ENCODE measurements at regions of chr9 and their contacts with region 1.

Region 1: GRCh38 chr9:83208065-83208850 is 145.3 kb upstream of the RASEF start:
- DNase-seq: no peak
- ATAC-seq: peak in 2 of 4 donors; percentile 11 to 25
- H3K4me3 ChIP-seq: no peak overlapping the region
- H3K27ac ChIP-seq: no peak overlapping the region
- H3K4me1 ChIP-seq: peaks cover 0 to 4% (median 0%) of the 10 kb centered on the region in 12 donors
- H3K27me3 ChIP-seq: no peaks in the 10 kb centered on the region
- CTCF ChIP-seq: no peak
- POLR2A ChIP-seq: no peak

Region 2: DNA sequence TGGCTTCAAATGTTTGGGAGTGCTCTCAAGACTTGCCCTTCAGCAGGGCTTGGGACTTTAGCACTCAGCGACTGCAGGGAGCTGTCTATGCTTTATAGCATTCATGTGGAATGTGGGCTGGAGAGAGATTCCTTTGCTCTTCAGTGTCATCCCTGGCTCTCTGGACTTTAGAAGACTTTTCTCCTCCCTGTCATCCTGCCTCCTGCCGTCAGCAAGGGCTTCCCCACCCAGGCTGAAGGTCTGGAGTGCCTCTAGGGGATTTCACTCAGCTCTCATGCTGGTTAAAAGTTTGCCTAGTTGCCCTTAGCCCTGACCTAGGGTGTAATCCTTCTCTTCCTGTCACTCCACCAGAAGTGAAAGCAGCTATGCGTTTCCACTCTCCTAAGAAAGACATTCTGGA is 119.1 kb after region 1 on chr9:
- intact Hi-C with region 1: loop called in 4 of 10 experiments (anchors 5 to 10 kb)
- DNase-seq: no peak
- ATAC-seq: peak in 3 of 4 donors; percentile 37 to 71 (median 45)
- H3K4me3 ChIP-seq: no peak overlapping the region
- H3K27ac ChIP-seq: no peak overlapping the region
- H3K4me1 ChIP-seq: peaks cover 0 to 17% (median 3%) of the 10 kb centered on the region in 12 donors
- H3K27me3 ChIP-seq: no peaks in the 10 kb centered on the region
- CTCF ChIP-seq: no peak
- POLR2A ChIP-seq: no peak

Measured in heart left ventricle (tissue), 16 donors.